Body of pancreas (tissue), 4 donors: ENCODE measurements at regions of chr11 and their contacts with region 1.

Region 1: DNA sequence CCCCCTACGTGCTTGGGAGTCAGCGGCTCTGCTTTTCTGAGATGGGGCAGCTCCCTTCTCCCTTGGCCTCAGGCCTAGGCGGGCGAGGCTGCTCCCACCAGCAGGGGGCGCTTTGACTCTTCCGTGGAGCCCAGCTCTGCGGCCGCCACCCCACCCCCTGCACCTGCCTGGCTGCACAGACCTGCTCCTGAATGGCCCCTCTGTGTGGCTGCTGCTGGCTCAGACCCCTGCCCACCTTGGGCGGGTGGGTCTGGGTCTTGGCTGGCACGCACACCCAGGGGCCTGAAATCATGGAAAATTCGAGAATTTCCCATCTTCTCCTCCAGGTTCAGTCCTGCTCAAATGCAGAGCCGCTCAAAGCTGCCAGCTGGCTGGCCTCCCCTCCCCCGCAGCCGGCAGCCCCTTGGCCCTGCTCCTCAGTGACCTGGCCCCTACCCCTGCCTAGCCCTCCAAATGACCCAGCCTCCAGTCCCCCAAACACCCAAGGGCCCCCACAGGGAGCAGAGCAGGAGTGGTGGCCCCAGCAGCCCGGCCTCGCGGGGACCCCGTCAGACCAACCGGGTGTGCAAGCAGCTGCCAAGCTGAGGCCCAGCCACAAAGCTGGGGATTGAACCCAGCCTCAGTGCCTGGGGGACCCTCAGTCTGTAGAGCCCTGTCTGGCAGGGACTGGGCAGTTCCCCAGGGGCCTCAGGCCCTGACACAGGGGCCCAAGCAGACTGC is 9.0 kb downstream of the PRR33 start:
- DNase-seq: peak; percentile 83 to 88 (median 84)
- ATAC-seq: peak; percentile 88
- H3K4me3 ChIP-seq: no peak overlapping the region
- H3K27ac ChIP-seq: peak overlapping the region in 1 of 4 donors; percentile 3
- H3K4me1 ChIP-seq: peaks cover 15% of the 10 kb centered on the region
- H3K27me3 ChIP-seq: no peaks in the 10 kb centered on the region
- CTCF ChIP-seq: peak; percentile 84 to 95 (median 87)
- POLR2A ChIP-seq: no peak

Region 2: DNA sequence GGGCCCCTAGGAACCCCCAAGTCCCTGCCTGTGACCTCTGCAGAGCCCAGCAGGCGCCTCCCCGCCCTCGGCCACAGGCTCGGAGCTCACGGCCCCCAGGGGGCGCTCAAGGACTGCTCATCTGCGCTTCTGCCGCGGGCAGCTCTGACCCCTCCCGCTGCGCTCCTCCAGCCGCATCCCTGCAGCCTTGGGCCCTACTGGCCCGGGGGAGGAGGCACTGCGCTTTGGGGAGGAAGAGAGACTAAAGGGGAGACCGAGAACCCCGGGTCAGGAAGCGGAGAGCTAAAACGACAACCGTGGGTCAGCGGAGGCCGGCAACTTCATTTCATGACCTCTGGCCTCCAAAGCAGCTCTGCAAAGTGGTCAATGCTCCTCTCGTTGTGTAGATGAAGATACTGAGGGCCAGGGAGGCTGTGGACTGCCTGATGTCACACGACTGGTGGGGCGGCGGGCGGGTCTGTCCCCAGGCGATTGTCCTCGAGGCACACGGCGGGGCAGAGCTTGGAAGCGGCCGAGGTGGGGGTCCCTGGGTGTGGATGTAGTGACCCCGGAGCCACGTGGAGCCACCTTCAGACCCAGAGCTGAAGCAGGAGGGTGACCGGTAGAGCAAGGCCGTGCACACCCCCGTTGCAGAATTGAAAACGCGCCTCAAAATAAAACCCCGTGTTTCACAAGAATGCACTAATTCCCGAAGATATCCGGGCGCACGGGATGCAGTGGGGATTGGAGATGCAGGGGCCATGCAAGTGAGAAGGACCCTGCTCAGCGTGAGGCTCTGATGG is 188.4 kb before region 1 on chr11:
- intact Hi-C with region 1: loop called (anchors 5 kb)
- DNase-seq: peak; percentile 89 to 91 (median 90)
- ATAC-seq: peak; percentile 95
- H3K4me3 ChIP-seq: no peak overlapping the region
- H3K27ac ChIP-seq: peak overlapping the region in 2 of 4 donors; percentile 44 to 64
- H3K4me1 ChIP-seq: peaks cover 15% of the 10 kb centered on the region
- H3K27me3 ChIP-seq: no peaks in the 10 kb centered on the region
- CTCF ChIP-seq: peak; percentile 85 to 95 (median 92)
- POLR2A ChIP-seq: no peak

Region 3: DNA sequence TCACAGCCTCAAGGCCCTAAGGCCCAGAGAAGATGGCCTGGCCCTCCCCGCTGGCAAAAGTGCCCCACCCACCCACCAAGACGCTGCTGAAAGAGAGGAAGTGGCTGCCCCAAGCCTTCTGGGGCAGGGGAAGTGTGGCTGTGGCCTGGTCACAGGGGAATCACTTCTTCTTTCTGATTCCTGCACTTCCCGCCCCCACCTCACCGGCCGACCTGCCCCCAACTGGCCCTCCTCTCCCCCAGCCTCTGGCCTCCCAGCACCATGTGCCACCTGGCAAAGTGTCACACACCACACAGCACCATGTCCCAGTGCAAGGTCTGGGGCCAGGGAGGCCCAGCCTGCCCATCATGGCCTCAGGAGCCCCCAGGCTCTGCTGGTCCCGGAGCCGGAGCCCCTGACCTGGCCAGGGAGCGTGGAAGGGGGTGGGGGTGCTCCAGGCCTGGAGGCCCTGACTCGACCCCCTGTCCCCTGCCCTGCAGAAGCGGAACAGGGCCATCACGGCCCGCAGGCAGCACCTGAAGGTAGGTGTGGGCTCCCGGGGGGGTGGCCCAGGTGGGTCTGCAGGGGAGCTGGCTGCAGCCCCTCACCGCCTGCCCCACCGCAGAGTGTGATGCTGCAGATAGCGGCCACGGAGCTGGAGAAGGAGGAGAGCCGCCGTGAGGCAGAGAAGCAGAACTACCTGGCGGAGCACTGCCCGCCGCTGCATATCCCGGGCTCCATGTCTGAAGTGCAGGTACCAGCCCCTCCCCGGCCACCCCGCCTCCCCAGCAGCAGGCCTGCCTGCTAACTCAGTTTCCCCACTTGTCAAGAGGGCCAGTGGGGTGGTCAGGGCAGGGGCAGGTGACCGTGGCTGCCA is 42.5 kb before region 1 on chr11:
- intact Hi-C with region 1: no loop called
- DNase-seq: peak in 2 of 4 donors; percentile 31 to 69
- ATAC-seq: no peak
- H3K4me3 ChIP-seq: no peak overlapping the region
- H3K27ac ChIP-seq: peak overlapping the region in 3 of 4 donors; percentile 94 to 98 (median 96)
- H3K4me1 ChIP-seq: peaks cover 79% of the 10 kb centered on the region
- H3K27me3 ChIP-seq: no peaks in the 10 kb centered on the region
- CTCF ChIP-seq: no peak
- POLR2A ChIP-seq: no peak